IMR-90 (cell line): ENCODE measurements at regions of chr4 and their contacts with region 1.

Region 1: DNA sequence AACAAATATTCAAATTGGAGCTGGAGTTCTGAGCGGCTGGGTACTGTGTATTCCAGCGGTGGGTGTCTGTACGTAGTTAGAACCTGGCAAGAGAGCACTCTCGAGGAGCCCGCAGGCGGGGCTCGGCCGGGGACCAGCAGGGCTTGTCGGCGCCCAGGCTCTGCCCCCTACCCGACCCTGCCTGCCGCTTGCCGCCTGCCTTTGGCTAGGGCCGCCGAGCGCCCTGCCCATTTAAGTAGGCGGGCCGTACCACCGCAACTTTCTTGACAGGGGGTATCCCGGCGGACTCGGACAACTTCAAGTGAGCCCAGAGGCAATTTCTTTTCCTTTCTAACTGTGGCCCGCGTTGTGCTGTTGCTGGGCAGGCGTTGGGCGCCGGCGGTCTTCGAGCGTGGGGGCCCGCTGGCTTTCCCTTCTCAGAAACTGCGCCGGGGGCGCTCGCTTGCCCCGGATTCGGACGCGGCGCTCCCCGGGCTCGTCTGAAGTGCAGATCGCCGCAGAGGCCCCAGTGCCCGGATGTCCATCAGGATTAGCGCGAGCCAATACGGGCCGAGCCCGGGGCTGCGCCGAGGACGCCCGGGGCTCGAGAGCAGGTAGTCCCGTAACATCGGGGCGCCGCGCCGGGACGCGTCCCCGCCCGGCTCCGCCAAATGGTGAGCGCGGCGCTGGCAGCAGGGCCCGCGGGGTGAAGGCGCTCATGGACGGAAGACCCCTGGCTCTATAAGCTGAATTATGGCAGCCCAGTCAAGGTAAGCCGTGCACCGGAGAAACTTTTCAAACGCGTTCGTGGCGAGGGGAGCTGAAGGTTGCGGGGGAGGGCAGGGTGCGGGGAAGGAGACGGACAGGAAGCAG is 72.1 kb downstream of the AFF1 start:
- DNase-seq: peak; percentile 92
- ATAC-seq: peak; percentile 91
- H3K4me3 ChIP-seq: peak overlapping the region; percentile 83
- H3K27ac ChIP-seq: peak overlapping the region; percentile 93
- H3K4me1 ChIP-seq: peaks cover 4% of the 10 kb centered on the region; the same call in 1 of the 2 replicates
- H3K27me3 ChIP-seq: no peaks in the 10 kb centered on the region
- CTCF ChIP-seq: peak; percentile 15; the same call in 1 of the 2 replicates
- POLR2A ChIP-seq: peak; percentile 99
- RAD21 ChIP-seq: no peak; the same call in 1 of the 2 replicates

Region 2: DNA sequence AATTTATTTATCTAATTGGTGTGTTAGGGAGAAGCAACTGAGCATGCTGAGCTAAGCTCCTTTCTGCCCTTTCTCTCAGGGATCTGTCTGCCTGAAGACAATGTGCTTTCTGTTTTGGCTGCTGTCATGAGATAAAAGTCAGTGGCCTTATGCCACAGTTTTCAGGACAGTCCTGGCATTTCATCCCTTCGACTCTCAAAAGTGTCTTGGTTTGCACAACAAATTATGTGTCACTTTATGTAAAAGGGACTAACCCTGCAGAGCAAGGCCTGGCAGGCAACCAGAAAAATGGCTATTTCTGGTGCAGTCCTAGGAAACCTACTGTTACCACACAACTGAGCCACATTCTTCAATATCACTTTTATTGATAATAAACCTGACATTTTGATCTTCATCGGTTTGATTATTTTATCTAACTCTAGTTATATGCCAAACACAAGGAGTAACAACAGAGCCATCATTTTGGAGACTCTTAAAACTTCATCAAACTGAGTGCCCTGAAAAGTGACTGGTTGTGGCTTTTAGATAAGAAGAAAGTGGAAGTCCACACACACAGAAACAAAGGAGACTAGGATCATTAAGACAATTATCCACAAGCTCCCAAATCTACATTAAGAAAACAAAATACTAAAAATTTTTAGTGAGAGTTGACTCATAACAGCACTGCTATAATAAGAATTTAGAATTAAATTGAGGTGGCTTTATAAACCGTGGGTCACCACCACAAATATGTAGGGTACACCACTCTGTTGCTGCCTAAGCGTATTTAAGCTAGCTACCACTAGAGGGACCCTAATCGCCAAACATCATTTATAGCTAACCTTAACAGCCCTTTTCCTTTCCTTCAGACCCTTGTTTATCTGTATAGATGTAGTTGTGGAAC is 508.7 kb before region 1 on chr4:
- CTCF ChIA-PET with region 1: no interaction called
- POLR2A ChIA-PET with region 1: no interaction called
- dilution Hi-C with region 1: no loop called
- in situ Hi-C with region 1: no loop called
- intact Hi-C with region 1: loop called (anchors 2 kb)
- DNase-seq: peak; percentile 68
- ATAC-seq: peak; percentile 94
- H3K4me3 ChIP-seq: no peak overlapping the region
- H3K27ac ChIP-seq: no peak overlapping the region
- H3K4me1 ChIP-seq: peaks cover 3% of the 10 kb centered on the region; the same call in 1 of the 2 replicates
- H3K27me3 ChIP-seq: no peaks in the 10 kb centered on the region
- CTCF ChIP-seq: peak; percentile 79
- POLR2A ChIP-seq: no peak
- RAD21 ChIP-seq: peak; percentile 71

Region 3: DNA sequence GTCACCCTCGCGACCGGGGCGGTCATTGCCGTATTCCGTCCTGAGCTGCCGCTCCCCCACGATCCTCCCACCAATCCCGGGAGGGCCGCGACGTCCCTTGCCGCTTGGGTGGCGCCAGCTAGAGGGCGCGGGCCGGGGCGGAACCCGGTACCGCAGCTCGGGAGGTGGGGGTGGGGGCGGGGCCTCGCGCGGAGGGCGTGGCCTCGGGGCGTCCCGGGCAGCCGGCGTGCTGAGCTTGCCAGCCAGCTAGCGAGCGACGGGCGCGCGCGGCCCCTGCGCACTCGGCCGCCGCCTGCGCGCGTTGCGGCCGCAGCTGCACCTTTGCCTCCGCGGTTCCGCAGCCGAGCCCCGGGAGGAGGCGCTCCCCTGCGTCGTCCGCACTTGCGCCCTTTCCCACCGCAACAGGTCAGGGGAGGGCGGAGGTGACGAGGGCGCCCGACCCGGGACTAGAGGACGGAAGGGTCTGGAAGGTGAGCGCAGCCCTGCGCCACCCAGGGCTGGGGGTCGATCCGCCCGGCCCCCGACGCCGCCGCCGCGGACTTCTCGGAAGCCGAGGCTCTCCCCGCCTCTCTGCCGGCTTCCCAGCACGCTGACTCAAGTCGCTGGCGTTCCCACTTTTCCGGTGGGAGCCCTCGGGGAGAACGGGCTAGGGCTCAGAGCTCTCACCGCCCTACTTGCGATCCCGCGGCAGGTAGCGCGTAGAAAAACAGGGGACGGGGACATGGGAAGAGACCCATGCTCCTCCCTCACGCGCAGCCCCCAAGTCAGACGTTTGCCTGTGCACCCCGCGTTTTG is 71.9 kb before region 1 on chr4 and contains the start of gene AFF1:
- CTCF ChIA-PET with region 1: interaction called, 9 read pairs
- POLR2A ChIA-PET with region 1: interaction called, 6 read pairs
- dilution Hi-C with region 1: no loop called
- in situ Hi-C with region 1: loop called (anchors 5 kb)
- intact Hi-C with region 1: loop called (anchors 1 kb)
- DNase-seq: peak; percentile 79
- ATAC-seq: peak; percentile 94
- H3K4me3 ChIP-seq: peak within 1 kb of the TSS; percentile 80
- H3K27ac ChIP-seq: peak within 1 kb of the TSS; percentile 82
- H3K4me1 ChIP-seq: peaks cover 5% of the 10 kb centered on the region
- H3K27me3 ChIP-seq: no peaks in the 10 kb centered on the region
- CTCF ChIP-seq: peak; percentile 40
- POLR2A ChIP-seq: peak; percentile 78
- RAD21 ChIP-seq: 0 out of 2 replicates have a peak, but pooled peaks have one; percentile 15
- total RNA-seq, gene AFF1: 7.0 and 10.8 TPM in 2 replicates

Region 4: DNA sequence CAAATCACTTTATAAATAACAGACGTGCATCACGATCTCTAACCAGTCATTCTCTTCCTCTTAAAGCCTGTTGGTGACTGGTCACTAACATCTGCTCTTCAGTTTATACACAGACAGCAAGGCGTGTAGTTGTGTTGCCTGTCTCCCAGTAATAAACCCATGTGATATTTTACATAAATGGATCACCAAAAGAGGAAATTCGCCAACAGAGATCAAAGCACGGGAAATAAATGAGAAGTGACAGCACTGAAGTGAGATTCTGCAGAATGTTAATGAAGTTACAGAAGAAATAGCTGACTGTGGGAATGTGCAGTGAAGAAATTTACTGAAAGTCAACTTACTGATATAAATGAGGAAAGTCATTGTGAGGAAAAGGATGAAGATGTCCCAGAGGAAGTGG is 25.1 kb before region 1 on chr4:
- CTCF ChIA-PET with region 1: no interaction called
- POLR2A ChIA-PET with region 1: no interaction called
- dilution Hi-C with region 1: no loop called
- in situ Hi-C with region 1: no loop called
- intact Hi-C with region 1: no loop called
- DNase-seq: no peak
- ATAC-seq: no peak
- H3K4me3 ChIP-seq: no peak overlapping the region
- H3K27ac ChIP-seq: no peak overlapping the region
- H3K4me1 ChIP-seq: no peaks in the 10 kb centered on the region; the same call in 1 of the 2 replicates
- H3K27me3 ChIP-seq: no peaks in the 10 kb centered on the region
- CTCF ChIP-seq: no peak
- POLR2A ChIP-seq: no peak
- RAD21 ChIP-seq: no peak

Region 5: DNA sequence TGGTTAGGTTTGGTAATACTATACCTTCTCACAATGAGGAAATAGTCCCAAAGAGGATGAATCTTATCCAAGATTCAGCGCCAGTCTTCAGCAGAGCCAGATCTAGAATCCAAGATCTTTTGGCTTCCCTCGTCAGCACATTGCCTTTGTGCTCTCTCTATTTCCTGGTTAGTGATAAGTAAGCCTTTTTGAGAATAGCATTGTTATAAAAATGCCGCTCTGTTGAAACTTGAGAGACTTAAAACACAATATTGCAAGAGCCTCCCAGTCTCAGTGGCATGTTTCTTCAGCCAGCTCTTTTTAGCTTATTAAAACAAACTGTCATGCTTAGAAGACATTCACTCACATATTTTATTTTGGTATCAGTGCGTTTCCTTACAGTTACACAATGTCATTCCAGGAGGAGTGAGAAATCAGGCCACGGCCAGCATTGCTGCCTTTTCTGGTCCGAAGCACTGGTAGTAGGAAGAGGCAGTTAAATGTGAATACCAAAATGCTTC is 72.1 kb after region 1 on chr4:
- CTCF ChIA-PET with region 1: interaction called, 3 read pairs
- POLR2A ChIA-PET with region 1: no interaction called
- dilution Hi-C with region 1: no loop called
- in situ Hi-C with region 1: no loop called
- intact Hi-C with region 1: loop called (anchors 2 kb)
- DNase-seq: peak; percentile 88
- ATAC-seq: peak; percentile 90
- H3K4me3 ChIP-seq: no peak overlapping the region; the same call in 1 of the 2 replicates
- H3K27ac ChIP-seq: peak overlapping the region; percentile 73
- H3K4me1 ChIP-seq: peaks cover 10% of the 10 kb centered on the region
- H3K27me3 ChIP-seq: no peaks in the 10 kb centered on the region
- CTCF ChIP-seq: no peak
- POLR2A ChIP-seq: no peak
- RAD21 ChIP-seq: peak; percentile 9; the same call in 1 of the 2 replicates

Region 6: GRCh38 chr4:87235020-87235671 is 228.2 kb after region 1 on chr4:
- CTCF ChIA-PET with region 1: no interaction called
- POLR2A ChIA-PET with region 1: no interaction called
- dilution Hi-C with region 1: no loop called
- in situ Hi-C with region 1: no loop called
- intact Hi-C with region 1: loop called (anchors 2 kb)
- DNase-seq: peak; percentile 62
- ATAC-seq: peak; percentile 54
- H3K4me3 ChIP-seq: peak overlapping the region; percentile 72; the same call in 1 of the 2 replicates
- H3K27ac ChIP-seq: no peak overlapping the region
- H3K4me1 ChIP-seq: peaks cover 6% of the 10 kb centered on the region
- H3K27me3 ChIP-seq: no peaks in the 10 kb centered on the region
- CTCF ChIP-seq: no peak
- POLR2A ChIP-seq: no peak
- RAD21 ChIP-seq: no peak